ENCODE measurements at regions of chr12 and their contacts with region 1.

Region 1: GRCh38 chr12:94973221-94973620 is 30.3 kb downstream of the NDUFA12 start:
- DNase-seq: peak; percentile 68
- H3K4me3 ChIP-seq: peak overlapping the region; percentile 18
- H3K27ac ChIP-seq: peak overlapping the region; percentile 39
- H3K4me1 ChIP-seq: peaks cover 52% of the 10 kb centered on the region
- CTCF ChIP-seq: no peak

Region 2: DNA sequence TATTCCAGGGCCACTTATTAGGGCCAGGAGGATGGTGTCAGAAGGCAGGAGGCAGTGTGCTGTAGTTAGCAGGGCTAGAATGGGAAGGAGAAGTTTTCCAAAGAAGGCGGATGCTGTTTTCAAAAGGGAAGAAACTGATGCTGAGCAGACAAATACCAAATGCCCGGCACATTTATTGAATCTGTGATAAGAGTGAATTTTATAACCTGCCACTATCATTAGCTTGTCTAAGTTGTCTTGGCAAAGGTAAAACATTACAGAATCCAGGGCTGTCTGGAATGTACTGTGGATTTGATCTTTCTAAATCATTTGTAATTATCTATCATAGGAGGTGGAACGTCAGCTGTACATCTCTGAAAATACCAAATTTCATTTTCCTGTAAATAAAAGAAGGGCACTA is 10.6 kb before region 1 on chr12:
- CTCF ChIA-PET with region 1: no interaction called
- POLR2A ChIA-PET with region 1: interaction called, 13 read pairs
- intact Hi-C with region 1: no loop called
- DNase-seq: no peak
- H3K4me3 ChIP-seq: no peak overlapping the region
- H3K27ac ChIP-seq: no peak overlapping the region
- H3K4me1 ChIP-seq: peaks cover 7% of the 10 kb centered on the region
- CTCF ChIP-seq: no peak

Measured in OCI-LY7 (cell line).